ENCODE measurements at regions of chr12 and their contacts with region 1.

Region 1: DNA sequence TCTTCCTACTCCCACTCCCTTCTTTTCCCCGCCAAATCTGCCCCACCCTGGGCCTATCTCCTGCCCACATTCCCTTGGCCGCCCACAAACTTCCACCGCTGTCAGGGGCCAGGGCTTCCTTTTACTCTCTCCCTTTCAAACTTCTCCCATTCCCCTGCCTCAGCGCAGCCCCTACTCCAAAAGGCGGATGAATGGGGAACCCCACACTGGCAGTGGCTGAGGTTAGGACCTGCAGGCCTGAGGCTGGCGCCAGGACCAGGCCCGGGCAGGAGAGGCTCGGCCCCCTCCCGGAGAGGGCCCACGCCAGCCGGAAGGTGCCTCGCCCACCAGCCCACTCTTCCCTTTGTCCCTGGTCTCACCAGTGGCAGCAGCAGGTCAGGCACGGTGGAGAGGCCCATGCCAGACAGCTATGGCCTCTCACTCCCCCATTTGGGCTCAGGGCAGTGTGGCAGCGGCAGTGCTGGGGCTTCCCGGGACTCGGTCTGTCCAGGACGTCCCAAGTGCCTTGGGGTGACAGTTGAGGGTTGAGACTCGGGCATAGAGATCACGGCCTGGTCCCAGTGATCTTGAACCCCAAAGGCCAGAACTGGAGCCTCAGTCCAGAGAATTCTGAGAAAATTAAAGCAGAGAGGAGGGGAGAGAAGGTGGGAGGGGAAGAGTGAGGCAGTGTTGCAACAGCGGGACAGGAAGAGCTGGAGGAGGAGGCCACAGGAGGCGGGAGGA is at the start of gene TNFRSF1A:
- DNase-seq: peak; percentile 82 to 87 (median 82)
- ATAC-seq: peak; percentile 68 to 84 (median 84)
- H3K4me3 ChIP-seq: peak within 1 kb of the TSS; percentile 69 to 100 (median 84)
- H3K27ac ChIP-seq: peak within 1 kb of the TSS; percentile 90 to 100 (median 98)
- H3K4me1 ChIP-seq: peaks cover 0 to 74% (median 62%) of the 10 kb centered on the region in 12 donors
- H3K27me3 ChIP-seq: no peaks in the 10 kb centered on the region
- CTCF ChIP-seq: no peak
- POLR2A ChIP-seq: peak in 1 of 2 donors; percentile 61
- total RNA-seq, gene TNFRSF1A: 37.2 to 141 (median 54.2) TPM

Region 2: DNA sequence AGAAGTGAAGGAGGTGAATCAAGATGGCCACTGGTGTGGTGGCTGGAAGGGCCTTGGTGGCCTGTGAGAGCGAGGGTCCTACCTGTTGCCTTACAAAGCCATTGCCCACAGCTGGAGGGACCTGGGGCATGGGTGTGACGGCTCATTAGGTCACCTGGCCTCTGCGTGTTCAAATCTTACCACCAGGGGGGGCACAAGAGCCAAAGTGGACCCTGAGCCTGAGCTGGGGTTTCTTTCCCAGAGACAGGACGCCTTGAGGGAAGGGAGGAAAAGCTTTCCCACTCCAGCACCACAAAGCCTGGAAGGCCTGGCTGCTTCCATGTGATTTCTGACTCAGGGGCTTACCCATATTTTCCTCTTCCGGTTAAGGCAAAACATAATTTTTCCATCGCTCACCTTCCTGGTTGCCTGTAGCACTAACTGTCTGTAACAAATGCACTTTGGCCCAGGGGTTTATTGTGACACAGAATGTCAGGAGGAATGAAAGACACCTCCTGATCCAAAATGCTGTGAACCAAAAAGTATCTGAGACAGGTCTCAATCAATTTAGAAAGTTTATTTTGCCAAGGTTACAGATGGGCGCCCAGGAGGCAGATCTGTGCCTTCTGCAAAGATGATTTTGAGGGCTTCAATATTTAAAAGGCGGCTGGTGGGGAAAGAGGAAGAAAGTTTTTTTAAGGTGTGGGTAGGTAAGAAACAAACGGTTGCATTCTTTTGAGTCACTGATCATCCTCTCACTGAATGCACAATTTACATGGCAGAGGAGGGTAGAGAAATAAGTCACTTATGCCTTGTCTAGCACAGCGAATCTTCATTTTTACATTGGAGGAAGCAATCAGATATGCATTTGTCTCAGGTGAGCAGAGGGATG is 145.7 kb before region 1 on chr12:
- intact Hi-C with region 1: no loop called
- DNase-seq: peak; percentile 80 to 88 (median 88)
- ATAC-seq: peak; percentile 78 to 85 (median 81)
- H3K4me3 ChIP-seq: no peak overlapping the region
- H3K27ac ChIP-seq: peak overlapping the region; percentile 24 to 80 (median 52)
- H3K4me1 ChIP-seq: peaks cover 0 to 36% (median 13%) of the 10 kb centered on the region in 12 donors
- H3K27me3 ChIP-seq: peaks cover 0 to 12% (median 0%) of the 10 kb centered on the region in 9 donors
- CTCF ChIP-seq: peak; percentile 90 to 96 (median 94)
- POLR2A ChIP-seq: no peak

Region 3: GRCh38 chr12:6367065-6367968 is 25.7 kb after region 1 on chr12:
- intact Hi-C with region 1: loop called in 1 of 10 experiments (anchors 2 kb)
- DNase-seq: peak in 1 of 5 donors; percentile 25
- ATAC-seq: peak in 1 of 4 donors; percentile 25
- H3K4me3 ChIP-seq: no peak overlapping the region
- H3K27ac ChIP-seq: peak overlapping the region in 1 of 12 donors; percentile 80
- H3K4me1 ChIP-seq: peaks cover 0 to 48% (median 9%) of the 10 kb centered on the region in 12 donors
- H3K27me3 ChIP-seq: no peaks in the 10 kb centered on the region
- CTCF ChIP-seq: peak in 9 of 12 donors; percentile 8 to 45 (median 29)
- POLR2A ChIP-seq: no peak

Region 4: GRCh38 chr12:6383572-6384498 is 42.3 kb after region 1 on chr12 and contains the start of gene LTBR:
- intact Hi-C with region 1: loop called in 9 of 10 experiments (anchors 2 to 5 kb)
- DNase-seq: peak; percentile 96 to 99 (median 98)
- ATAC-seq: peak; percentile 92 to 98 (median 97)
- H3K4me3 ChIP-seq: peak within 1 kb of the TSS; percentile 45 to 92 (median 78)
- H3K27ac ChIP-seq: peak within 1 kb of the TSS; percentile 75 to 98 (median 94)
- H3K4me1 ChIP-seq: peaks cover 0 to 75% (median 24%) of the 10 kb centered on the region in 12 donors
- H3K27me3 ChIP-seq: no peaks in the 10 kb centered on the region
- CTCF ChIP-seq: peak in 3 of 12 donors; percentile 7 to 43 (median 32)
- POLR2A ChIP-seq: peak in 1 of 2 donors; percentile 74
- total RNA-seq, gene LTBR: 16.0 to 83.4 (median 26.2) TPM

Region 5: GRCh38 chr12:6528887-6529235 is 187.3 kb after region 1 on chr12:
- intact Hi-C with region 1: loop called in 6 of 10 experiments (anchors 5 to 10 kb)
- DNase-seq: no peak
- ATAC-seq: no peak
- H3K4me3 ChIP-seq: no peak overlapping the region
- H3K27ac ChIP-seq: no peak overlapping the region
- H3K4me1 ChIP-seq: peaks cover 0 to 25% (median 17%) of the 10 kb centered on the region in 12 donors
- H3K27me3 ChIP-seq: no peaks in the 10 kb centered on the region
- CTCF ChIP-seq: no peak
- POLR2A ChIP-seq: no peak

Region 6: GRCh38 chr12:6554168-6555017 is 212.8 kb after region 1 on chr12:
- intact Hi-C with region 1: loop called in 1 of 10 experiments (anchors 10 kb)
- DNase-seq: peak; percentile 79 to 89 (median 86)
- ATAC-seq: peak; percentile 24 to 51 (median 39)
- H3K4me3 ChIP-seq: peak overlapping the region; percentile 87 to 98 (median 93)
- H3K27ac ChIP-seq: peak overlapping the region; percentile 31 to 96 (median 90)
- H3K4me1 ChIP-seq: peaks cover 6 to 75% (median 62%) of the 10 kb centered on the region in 12 donors
- H3K27me3 ChIP-seq: no peaks in the 10 kb centered on the region
- CTCF ChIP-seq: peak; percentile 37 to 77 (median 64)
- POLR2A ChIP-seq: no peak

Measured in heart left ventricle (tissue), 16 donors.